ENCODE measurements at regions of chr6 and their contacts with region 1.

Region 1: GRCh38 chr6:125779924-125780539 is 10.7 kb upstream of the NCOA7 start:
- DNase-seq: peak; percentile 94
- H3K4me3 Mint-ChIP-seq: no peak overlapping the region
- H3K27ac Mint-ChIP-seq: no peak overlapping the region
- H3K4me1 Mint-ChIP-seq: peaks cover 14% of the 10 kb centered on the region
- H3K27me3 Mint-ChIP-seq: peaks cover 14% of the 10 kb centered on the region
- CTCF ChIP-seq: no peak

Region 2: GRCh38 chr6:125301435-125302391 is 478.3 kb before region 1 on chr6 and contains the start of gene HDDC2:
- CTCF ChIA-PET with region 1: no interaction called
- POLR2A ChIA-PET with region 1: interaction called, 17 read pairs
- intact Hi-C with region 1: no loop called
- DNase-seq: peak; percentile 60
- H3K4me3 Mint-ChIP-seq: peak within 1 kb of the TSS; percentile 79
- H3K27ac Mint-ChIP-seq: peak within 1 kb of the TSS; percentile 33
- H3K4me1 Mint-ChIP-seq: peaks cover 31% of the 10 kb centered on the region
- H3K27me3 Mint-ChIP-seq: peaks cover 7% of the 10 kb centered on the region
- CTCF ChIP-seq: no peak
- total RNA-seq, gene HDDC2: 141 and 167 TPM in 2 replicates

Region 3: DNA sequence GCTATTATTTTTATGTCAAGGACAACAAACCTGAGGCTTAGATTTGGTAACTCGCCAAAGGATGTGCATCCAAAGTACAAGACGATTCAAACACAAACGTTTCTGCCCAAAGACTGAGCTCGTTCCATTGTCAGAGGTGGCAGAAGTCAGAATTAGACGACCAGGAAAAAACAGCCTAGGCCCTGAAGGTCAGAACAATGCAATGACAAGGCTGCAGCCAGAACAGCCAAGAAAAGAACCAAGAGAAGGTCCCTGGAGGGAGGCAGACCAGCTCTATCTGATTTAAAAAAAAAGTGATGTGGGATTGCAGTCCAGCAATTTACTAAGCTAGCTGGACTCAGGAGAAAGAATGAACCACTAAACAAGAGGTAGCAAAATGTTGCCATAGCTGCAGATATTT is 65.0 kb after region 1 on chr6:
- CTCF ChIA-PET with region 1: interaction called, 8 read pairs
- POLR2A ChIA-PET with region 1: interaction called, 12 read pairs
- intact Hi-C with region 1: no loop called
- DNase-seq: no peak
- H3K4me3 Mint-ChIP-seq: no peak overlapping the region
- H3K27ac Mint-ChIP-seq: no peak overlapping the region
- H3K4me1 Mint-ChIP-seq: no peaks in the 10 kb centered on the region
- H3K27me3 Mint-ChIP-seq: no peaks in the 10 kb centered on the region
- CTCF ChIP-seq: no peak

Region 4: GRCh38 chr6:125906158-125906998 is 126.3 kb after region 1 on chr6:
- CTCF ChIA-PET with region 1: interaction called, 4 read pairs
- POLR2A ChIA-PET with region 1: no interaction called
- intact Hi-C with region 1: loop called (anchors 5 kb)
- DNase-seq: peak; percentile 69
- H3K4me3 Mint-ChIP-seq: no peak overlapping the region
- H3K27ac Mint-ChIP-seq: peak overlapping the region; percentile 24
- H3K4me1 Mint-ChIP-seq: peaks cover 41% of the 10 kb centered on the region
- H3K27me3 Mint-ChIP-seq: no peaks in the 10 kb centered on the region
- CTCF ChIP-seq: peak; percentile 59

Region 5: GRCh38 chr6:125956506-125957390 is 176.7 kb after region 1 on chr6 and contains the start of gene HINT3:
- CTCF ChIA-PET with region 1: interaction called, 270 read pairs
- POLR2A ChIA-PET with region 1: interaction called, 52 read pairs
- intact Hi-C with region 1: no loop called
- DNase-seq: peak; percentile 96
- H3K4me3 Mint-ChIP-seq: no peak within 1 kb of the TSS
- H3K27ac Mint-ChIP-seq: no peak within 1 kb of the TSS
- H3K4me1 Mint-ChIP-seq: no peaks in the 10 kb centered on the region
- H3K27me3 Mint-ChIP-seq: no peaks in the 10 kb centered on the region
- CTCF ChIP-seq: peak; percentile 97
- total RNA-seq, gene HINT3: 17.9 and 20.2 TPM in 2 replicates

Measured in MCF 10A (cell line).